GM13977 (cell line): ENCODE measurements at regions of chr3 and their contacts with region 1.

Region 1: DNA sequence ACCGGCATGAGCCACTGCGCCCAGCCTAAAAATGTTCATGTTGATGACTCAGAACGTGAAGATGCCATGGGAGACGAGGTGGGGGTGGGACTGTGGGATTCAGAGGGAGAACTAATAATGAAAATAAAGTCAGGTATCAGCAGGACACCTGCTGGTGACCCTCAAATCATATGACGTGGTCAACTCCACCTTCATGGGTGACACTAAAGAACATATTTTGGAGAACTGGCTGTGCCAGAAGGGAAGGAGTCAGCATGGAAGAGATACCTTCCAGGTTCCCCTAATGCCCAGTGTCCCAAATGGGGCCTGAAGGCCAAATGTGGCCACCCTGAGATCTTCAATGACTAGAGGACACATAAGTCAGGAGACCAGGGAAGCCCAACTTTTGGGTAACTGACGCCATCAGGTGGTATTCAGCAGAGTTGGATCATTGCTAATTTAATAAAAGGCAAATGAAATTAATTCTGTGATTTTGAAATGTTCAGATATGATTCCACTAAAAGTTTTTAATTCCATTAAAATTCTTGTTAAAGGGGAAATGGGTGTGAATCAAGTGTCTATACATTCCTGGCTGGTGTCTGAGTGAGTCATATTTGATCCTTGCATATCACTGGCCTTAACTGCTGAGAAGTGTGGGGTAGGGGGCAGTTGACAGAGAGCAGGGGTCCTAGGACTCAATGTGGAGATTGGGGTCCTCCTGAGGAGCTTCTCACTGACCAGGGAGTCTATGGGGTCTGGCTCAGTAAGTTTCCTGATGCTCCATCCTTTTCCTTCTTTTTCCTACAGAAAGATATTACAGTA is 88.7 kb upstream of the GSK3B start:
- DNase-seq: peak; percentile 12
- CTCF ChIP-seq: peak; percentile 38

Region 2: DNA sequence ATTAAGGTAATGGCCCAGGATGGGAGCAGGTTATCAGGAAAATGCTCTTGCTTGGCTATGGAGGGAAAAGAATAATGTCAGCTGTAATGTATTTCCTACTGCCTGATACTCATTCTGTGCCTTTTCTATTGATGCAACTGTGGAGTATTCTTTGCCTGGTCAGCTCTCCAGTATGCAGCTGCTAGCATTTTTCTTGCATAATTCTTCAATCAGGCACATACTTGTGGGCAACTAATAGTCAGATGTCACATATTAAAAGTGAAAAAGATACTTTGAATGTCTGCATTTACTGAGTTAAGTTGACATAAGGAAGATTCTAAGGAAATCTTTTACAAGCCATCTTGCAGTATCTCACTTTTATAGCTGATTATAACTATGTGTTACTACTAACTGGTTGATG is 653.0 kb before region 1 on chr3:
- in situ Hi-C with region 1: no loop called
- DNase-seq: no peak
- CTCF ChIP-seq: no peak

Region 3: GRCh38 chr3:119885746-119886530 is 297.0 kb before region 1 on chr3:
- in situ Hi-C with region 1: loop called (anchors 10 kb)
- DNase-seq: no peak
- CTCF ChIP-seq: no peak

Region 4: DNA sequence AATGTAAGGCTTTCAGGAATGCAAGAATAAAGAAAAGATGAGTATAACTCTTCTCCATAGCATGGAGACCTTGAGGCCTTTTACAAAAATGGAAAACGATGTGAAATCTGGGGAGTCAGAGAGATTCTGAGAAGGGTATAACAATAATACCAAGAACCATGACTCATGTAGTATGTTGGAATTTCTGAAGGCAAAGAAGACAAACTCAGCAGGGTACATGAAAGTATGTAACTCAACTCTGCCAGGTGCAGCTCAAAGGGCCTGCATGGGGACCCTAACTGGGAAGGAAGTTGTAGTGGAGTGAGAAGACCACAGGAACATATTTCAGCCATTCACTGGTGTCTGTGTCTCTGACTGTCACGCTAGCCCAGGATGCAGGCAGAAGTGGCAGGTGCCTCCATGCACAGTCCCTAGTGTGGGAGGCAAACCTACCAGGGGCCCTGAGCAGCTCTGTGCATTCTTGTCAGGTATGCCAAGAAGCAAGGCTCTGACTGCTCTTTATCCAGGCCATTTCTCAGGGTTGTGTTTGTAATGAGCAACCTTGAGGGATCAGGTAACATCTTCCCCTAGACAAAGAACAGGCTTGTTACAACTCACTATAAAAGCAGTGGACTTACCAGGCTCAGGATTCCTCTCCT is 44.9 kb after region 1 on chr3:
- in situ Hi-C with region 1: no loop called
- DNase-seq: no peak
- CTCF ChIP-seq: no peak